ENCODE measurements at regions of chr14 and their contacts with region 1.

Region 1: GRCh38 chr14:76386915-76387782 is 11.2 kb downstream of the ESRRB start:
- DNase-seq: peak; percentile 77
- ATAC-seq: peak; percentile 97
- H3K4me3 Mint-ChIP-seq: no peak overlapping the region
- H3K27ac Mint-ChIP-seq: no peak overlapping the region
- H3K4me1 Mint-ChIP-seq: no peaks in the 10 kb centered on the region
- H3K27me3 Mint-ChIP-seq: peaks cover 31% of the 10 kb centered on the region

Region 2: DNA sequence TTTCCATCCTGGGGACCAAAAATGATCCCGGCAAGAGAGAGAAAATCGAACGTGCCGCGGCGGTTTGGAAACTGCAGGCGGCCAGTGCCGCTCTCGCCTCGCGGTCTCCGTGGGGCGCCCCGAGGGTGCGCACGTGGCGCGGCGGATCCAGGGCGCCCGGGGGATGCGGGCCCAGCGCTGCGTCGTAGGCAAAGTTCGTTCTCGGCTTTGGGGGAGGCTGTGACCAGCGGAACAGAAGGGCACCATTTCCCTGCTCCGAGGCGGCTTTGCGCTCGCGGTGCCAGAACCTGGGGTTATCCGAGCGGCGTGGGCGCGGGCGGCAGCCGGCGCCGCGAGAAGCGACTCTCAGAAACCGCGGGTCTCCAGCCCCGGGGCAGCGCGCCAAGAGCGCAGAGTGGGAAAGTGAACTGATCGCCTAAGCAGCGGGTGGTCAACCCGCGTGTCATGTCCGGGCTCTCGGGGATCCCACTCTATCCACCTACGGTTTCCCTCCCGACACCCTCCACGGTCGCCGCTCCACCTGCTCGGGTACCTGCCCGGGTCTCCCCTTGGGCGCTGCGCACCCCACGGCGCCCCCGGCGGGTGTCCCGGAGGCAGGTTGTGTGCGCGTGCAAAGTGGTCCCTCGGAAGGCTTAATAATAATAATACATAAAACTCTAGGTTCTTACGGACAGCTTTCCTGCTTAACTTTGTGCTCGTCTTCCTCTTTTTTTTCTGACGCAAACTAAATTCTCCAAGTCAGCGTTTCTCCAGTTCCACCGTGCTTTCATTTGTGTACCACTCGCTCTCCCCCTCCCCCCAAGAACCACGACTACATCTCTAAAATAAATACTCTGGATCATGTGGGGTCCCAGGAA is 10.0 kb before region 1 on chr14:
- CTCF ChIA-PET with region 1: interaction called, 10 read pairs
- POLR2A ChIA-PET with region 1: no interaction called
- DNase-seq: no peak
- ATAC-seq: no peak
- H3K4me3 Mint-ChIP-seq: no peak overlapping the region
- H3K27ac Mint-ChIP-seq: no peak overlapping the region
- H3K4me1 Mint-ChIP-seq: peaks cover 3% of the 10 kb centered on the region
- H3K27me3 Mint-ChIP-seq: peaks cover 68% of the 10 kb centered on the region

Measured in activated CD8-positive, alpha-beta T cell treated with anti-CD3 and anti-CD28 coated beads, Interleukin-2, amount 10 ng/mL, durations not matched to agents 7 days and 5 days (primary cell).